Activated CD4-positive, alpha-beta memory T cell treated with anti-CD3 and anti-CD28 coated beads, Interleukin-2, amount 10 ng/mL, durations not matched to agents 7 days and 5 days (primary cell): ENCODE measurements at regions of chr6 and their contacts with region 1.

Region 1: GRCh38 chr6:16332175-16332542 is 93.8 kb downstream of the GMPR start:
- DNase-seq: peak; percentile 83
- H3K4me3 Mint-ChIP-seq: no peak overlapping the region
- H3K27ac Mint-ChIP-seq: no peak overlapping the region
- H3K4me1 Mint-ChIP-seq: peaks cover 3% of the 10 kb centered on the region
- H3K27me3 Mint-ChIP-seq: no peaks in the 10 kb centered on the region

Region 2: DNA sequence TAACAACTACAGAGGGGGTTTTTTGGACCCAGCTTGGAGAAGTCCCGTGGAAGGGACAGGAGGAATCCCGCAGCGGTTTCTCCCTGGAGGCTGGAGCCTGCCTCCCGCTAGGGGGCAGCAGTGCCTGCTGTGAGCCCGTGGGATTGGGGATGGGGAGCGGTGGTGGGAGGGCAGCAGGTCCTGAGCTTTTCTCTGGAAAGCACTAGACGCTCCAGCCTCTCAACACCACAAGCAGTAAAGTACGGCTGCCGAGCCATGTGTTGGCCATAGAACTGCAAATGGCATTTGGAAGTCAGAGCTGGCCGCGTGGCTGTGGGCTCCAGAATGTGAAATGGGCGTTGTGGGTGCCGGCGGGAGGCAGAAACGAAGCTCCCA is 46.0 kb before region 1 on chr6:
- CTCF ChIA-PET with region 1: interaction called, 10 read pairs
- POLR2A ChIA-PET with region 1: no interaction called
- DNase-seq: peak; percentile 36
- H3K4me3 Mint-ChIP-seq: no peak overlapping the region
- H3K27ac Mint-ChIP-seq: no peak overlapping the region
- H3K4me1 Mint-ChIP-seq: no peaks in the 10 kb centered on the region
- H3K27me3 Mint-ChIP-seq: no peaks in the 10 kb centered on the region

Region 3: DNA sequence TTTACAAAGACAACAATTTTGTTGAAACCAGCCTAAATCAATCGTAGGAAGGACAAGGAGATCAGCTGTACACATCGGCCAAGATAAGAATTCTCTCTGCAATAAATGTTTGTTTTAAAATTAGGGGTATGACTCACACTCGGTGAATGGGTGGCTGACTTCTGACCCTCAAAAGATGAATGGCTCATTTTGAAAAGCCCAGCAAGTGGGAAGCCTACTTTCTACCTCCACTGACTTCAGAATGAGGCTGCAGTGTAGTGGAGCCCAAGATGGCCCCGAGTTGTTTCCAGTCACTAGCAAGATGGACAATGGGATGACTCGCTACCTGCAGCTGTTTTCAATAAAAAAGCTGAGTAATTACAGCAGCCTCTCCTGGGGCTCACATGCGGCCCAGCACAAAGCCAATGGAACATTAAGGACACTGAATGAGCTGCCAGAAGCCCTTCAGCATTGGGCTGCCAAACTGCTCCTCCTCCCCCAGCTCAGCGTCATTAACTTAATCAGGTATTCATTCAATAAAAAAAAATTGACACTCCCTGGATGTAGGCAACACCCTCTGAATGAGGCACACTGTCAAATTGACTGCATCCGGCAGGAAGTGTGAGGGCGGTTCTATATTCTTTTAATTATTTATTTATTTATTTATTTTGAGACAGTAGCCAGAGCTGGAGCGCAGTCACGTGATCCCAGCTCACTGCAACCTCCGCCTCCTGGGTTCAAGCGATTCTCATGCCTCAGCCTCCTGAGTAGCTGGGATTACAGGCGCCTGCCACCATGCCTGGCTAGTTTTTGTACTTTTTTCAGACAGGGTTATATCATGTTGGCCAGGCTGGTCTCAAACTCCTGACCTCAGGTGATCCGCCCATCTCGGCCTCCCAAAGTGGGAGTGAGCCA is 13.5 kb after region 1 on chr6:
- CTCF ChIA-PET with region 1: interaction called, 15 read pairs
- POLR2A ChIA-PET with region 1: no interaction called
- DNase-seq: no peak
- H3K4me3 Mint-ChIP-seq: no peak overlapping the region
- H3K27ac Mint-ChIP-seq: no peak overlapping the region
- H3K4me1 Mint-ChIP-seq: no peaks in the 10 kb centered on the region
- H3K27me3 Mint-ChIP-seq: no peaks in the 10 kb centered on the region

Region 4: DNA sequence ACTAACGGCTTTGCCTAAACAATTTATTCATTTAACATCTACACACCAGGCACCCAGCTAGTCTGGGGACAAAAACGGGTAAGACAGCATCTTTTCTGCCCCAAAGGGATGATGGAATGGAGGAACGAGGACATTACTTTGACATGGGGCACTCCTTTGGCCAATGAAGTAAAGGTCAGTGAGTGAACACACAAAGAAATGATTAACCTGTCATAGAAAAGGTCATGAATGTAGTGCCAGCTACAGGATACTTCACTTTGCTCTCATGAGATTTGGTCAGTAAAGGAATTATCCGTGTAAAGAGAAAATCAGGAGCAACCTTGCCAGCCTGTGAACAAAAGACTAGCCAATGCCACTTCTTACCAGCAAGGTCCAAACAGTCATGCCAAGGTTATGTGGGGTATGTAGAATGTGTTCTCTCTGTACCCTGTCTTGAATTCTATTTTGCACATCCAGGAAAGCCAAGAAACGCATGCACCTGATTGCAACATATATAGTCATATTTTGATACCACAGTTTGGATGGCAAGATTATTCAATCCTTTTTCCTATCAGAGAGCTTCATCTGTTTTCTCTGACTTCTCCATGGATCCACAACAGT is 51.5 kb after region 1 on chr6:
- CTCF ChIA-PET with region 1: no interaction called
- POLR2A ChIA-PET with region 1: no interaction called
- DNase-seq: no peak
- H3K4me3 Mint-ChIP-seq: no peak overlapping the region
- H3K27ac Mint-ChIP-seq: no peak overlapping the region
- H3K4me1 Mint-ChIP-seq: no peaks in the 10 kb centered on the region
- H3K27me3 Mint-ChIP-seq: no peaks in the 10 kb centered on the region

Region 5: GRCh38 chr6:16432075-16433032 is 100.2 kb after region 1 on chr6:
- CTCF ChIA-PET with region 1: no interaction called
- POLR2A ChIA-PET with region 1: no interaction called
- DNase-seq: no peak
- H3K4me3 Mint-ChIP-seq: no peak overlapping the region
- H3K27ac Mint-ChIP-seq: peak overlapping the region; percentile 27
- H3K4me1 Mint-ChIP-seq: peaks cover 69% of the 10 kb centered on the region
- H3K27me3 Mint-ChIP-seq: no peaks in the 10 kb centered on the region

Region 6: GRCh38 chr6:16503970-16504415 is 171.8 kb after region 1 on chr6:
- CTCF ChIA-PET with region 1: interaction called, 11 read pairs
- POLR2A ChIA-PET with region 1: no interaction called
- DNase-seq: no peak
- H3K4me3 Mint-ChIP-seq: no peak overlapping the region
- H3K27ac Mint-ChIP-seq: no peak overlapping the region
- H3K4me1 Mint-ChIP-seq: peaks cover 37% of the 10 kb centered on the region
- H3K27me3 Mint-ChIP-seq: no peaks in the 10 kb centered on the region

Region 7: GRCh38 chr6:16964553-16965501 is 632.7 kb after region 1 on chr6:
- CTCF ChIA-PET with region 1: interaction called, 13 read pairs
- POLR2A ChIA-PET with region 1: no interaction called
- DNase-seq: peak; percentile 72
- H3K4me3 Mint-ChIP-seq: no peak overlapping the region
- H3K27ac Mint-ChIP-seq: no peak overlapping the region
- H3K4me1 Mint-ChIP-seq: peaks cover 3% of the 10 kb centered on the region
- H3K27me3 Mint-ChIP-seq: peaks cover 25% of the 10 kb centered on the region